WTC11 (cell line): ENCODE measurements at regions of chrX and their contacts with region 1.

Region 1: GRCh38 chrX:120485638-120486520 is 16.8 kb upstream of the LAMP2 start:
- DNase-seq: peak; percentile 53
- ATAC-seq: peak; percentile 94
- H3K4me3 Mint-ChIP-seq: peak overlapping the region; percentile 66
- H3K27ac Mint-ChIP-seq: peak overlapping the region; percentile 93
- H3K4me1 Mint-ChIP-seq: no peaks in the 10 kb centered on the region
- H3K27me3 Mint-ChIP-seq: no peaks in the 10 kb centered on the region
- CTCF ChIP-seq: peak; percentile 26; the same call in 1 of the 2 replicates

Region 2: DNA sequence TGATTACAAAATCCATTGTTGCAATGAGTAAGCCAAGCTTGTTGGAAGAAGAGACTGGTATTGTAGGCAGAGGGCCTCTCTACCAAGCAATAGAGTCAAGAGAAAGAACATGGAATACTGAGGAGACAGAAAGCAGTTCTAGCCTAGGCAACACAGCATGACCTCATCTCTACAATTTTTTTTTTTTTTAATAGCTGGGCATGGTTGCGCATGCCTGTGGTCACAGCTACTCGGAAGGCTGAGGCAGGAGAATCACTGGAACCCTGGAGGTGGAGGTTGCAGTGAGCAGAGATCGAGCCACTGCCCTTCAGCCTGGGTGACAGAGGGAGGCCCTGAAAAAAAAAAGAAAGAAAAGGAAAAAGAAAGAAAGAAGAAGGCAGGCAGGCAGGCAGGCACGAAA is 246.9 kb before region 1 on chrX:
- CTCF ChIA-PET with region 1: no interaction called
- POLR2A ChIA-PET with region 1: no interaction called
- DNase-seq: no peak
- ATAC-seq: no peak
- H3K4me3 Mint-ChIP-seq: no peak overlapping the region
- H3K27ac Mint-ChIP-seq: no peak overlapping the region; the same call in 1 of the 2 replicates
- H3K4me1 Mint-ChIP-seq: peaks cover 41% of the 10 kb centered on the region
- H3K27me3 Mint-ChIP-seq: no peaks in the 10 kb centered on the region
- CTCF ChIP-seq: no peak

Region 3: DNA sequence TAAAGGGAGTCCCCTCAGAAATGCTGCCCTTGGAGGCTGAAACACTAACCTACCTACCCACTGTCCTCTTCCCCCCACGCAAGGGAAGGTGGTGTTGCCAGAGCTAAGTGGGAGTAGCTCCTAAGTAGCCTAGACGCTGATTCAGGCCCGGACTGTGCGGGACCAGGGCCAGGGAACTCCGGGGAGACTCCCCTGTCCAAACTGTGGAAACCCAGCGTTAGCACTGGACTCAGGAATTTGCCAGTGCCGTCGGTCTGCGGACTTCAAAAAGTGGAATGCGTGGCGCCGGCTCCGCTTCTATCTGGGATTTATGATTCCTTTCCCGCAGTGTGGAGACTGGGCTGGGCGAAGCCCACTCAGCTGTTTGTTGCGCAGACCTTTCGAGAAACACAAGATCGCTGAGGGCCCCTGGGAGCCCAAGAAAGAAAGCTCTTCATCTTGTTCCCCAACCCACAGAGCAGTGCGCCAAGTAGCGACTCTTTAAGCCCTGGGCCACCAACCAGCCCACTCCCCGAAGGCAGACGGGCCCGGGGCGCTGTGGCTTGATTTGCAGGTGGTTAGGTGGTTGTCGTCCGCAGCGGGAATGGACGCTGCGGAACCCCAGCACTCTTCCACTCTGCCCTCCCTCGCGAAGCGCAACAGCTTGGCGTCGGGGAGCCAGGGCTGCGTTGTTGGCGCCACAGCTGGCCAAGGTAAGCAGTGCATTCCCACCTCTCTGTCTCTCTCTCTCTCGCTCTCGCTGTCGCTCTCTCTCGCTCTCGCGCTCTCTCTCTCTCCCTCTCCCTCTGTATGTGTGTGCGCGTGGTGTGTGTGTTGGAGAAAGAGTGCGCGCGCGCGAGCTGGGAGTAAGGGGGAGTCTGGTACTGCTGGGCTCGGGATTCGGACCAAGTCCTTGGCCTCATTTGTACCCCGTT is 176.7 kb before region 1 on chrX:
- CTCF ChIA-PET with region 1: interaction called, 14 read pairs
- POLR2A ChIA-PET with region 1: no interaction called
- DNase-seq: peak; percentile 67
- ATAC-seq: peak; percentile 76
- H3K4me3 Mint-ChIP-seq: peak overlapping the region; percentile 74
- H3K27ac Mint-ChIP-seq: no peak overlapping the region
- H3K4me1 Mint-ChIP-seq: peaks cover 44% of the 10 kb centered on the region
- H3K27me3 Mint-ChIP-seq: peaks cover 98% of the 10 kb centered on the region
- CTCF ChIP-seq: 0 out of 2 replicates have a peak, but pooled peaks have one; percentile 21

Region 4: DNA sequence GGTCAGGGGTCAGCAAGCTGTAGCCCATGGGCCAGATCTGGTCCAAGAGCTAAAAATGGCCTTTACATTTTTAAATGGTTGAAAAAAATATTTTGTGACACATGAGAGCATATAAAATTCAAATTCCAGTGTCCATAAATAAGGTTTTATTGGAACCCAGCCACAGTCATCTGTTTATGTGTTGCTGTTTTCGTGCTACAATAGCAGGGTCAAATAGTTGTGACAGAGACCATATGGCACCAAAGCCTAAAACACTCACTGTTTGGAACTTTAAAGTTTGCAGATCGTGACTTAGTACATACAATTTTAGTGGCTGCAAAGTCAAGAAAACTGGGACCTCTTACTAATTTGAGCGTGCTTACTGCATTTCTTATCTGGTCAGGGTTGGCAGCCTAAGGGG is 46.0 kb before region 1 on chrX:
- CTCF ChIA-PET with region 1: no interaction called
- POLR2A ChIA-PET with region 1: no interaction called
- DNase-seq: no peak
- ATAC-seq: no peak
- H3K4me3 Mint-ChIP-seq: no peak overlapping the region
- H3K27ac Mint-ChIP-seq: no peak overlapping the region
- H3K4me1 Mint-ChIP-seq: no peaks in the 10 kb centered on the region
- H3K27me3 Mint-ChIP-seq: no peaks in the 10 kb centered on the region
- CTCF ChIP-seq: no peak